IMR-90 (cell line): ENCODE measurements at regions of chr10 and their contacts with region 1.

Region 1: GRCh38 chr10:21399392-21400035 is 126.0 kb downstream of the SKIDA1 start:
- DNase-seq: peak; percentile 98
- ATAC-seq: peak; percentile 95
- H3K4me3 ChIP-seq: no peak overlapping the region
- H3K27ac ChIP-seq: peak overlapping the region; percentile 47; the same call in 1 of the 2 replicates
- H3K4me1 ChIP-seq: peaks cover 19% of the 10 kb centered on the region
- H3K27me3 ChIP-seq: no peaks in the 10 kb centered on the region
- CTCF ChIP-seq: no peak
- POLR2A ChIP-seq: no peak
- RAD21 ChIP-seq: no peak

Region 2: GRCh38 chr10:21292763-21293517 is 106.6 kb before region 1 on chr10:
- CTCF ChIA-PET with region 1: no interaction called
- POLR2A ChIA-PET with region 1: no interaction called
- dilution Hi-C with region 1: no loop called
- in situ Hi-C with region 1: no loop called
- intact Hi-C with region 1: loop called (anchors 2 kb)
- DNase-seq: peak; percentile 98
- ATAC-seq: peak; percentile 94
- H3K4me3 ChIP-seq: peak overlapping the region; percentile 13
- H3K27ac ChIP-seq: peak overlapping the region; percentile 72
- H3K4me1 ChIP-seq: peaks cover 2% of the 10 kb centered on the region; the same call in 1 of the 2 replicates
- H3K27me3 ChIP-seq: no peaks in the 10 kb centered on the region
- CTCF ChIP-seq: no peak
- POLR2A ChIP-seq: no peak
- RAD21 ChIP-seq: peak; percentile 14; the same call in 1 of the 2 replicates

Region 3: DNA sequence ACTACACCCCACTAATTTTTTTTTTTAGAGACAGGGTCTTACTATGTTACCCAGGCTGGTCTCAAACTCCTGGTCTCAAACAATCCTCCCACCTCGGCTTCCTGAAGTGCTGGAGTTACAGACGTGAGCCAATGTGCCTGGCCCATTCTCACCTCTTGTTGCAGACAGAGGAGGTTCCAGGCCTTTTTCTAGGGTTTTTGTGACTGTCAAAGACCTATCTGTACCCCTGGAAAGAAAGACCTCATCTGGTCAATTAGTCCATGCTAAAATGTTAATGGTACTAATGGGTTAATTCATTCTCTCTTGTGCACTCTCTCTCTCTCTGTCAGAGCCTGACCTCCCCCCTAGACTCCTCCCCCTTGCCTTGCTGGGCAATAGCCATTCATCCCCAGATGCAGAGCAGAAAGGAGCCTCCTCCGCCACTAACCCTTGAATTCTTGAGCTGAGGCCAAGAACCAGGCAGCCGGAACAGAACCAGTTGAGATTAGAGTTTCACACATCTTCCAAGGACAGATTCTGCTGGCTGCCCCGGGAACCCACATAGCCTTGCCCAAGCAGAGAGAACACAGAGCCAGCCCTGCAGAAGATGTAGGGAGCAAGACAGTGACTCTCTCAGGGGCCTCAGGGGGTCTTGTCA is 83.8 kb before region 1 on chr10:
- CTCF ChIA-PET with region 1: no interaction called
- POLR2A ChIA-PET with region 1: no interaction called
- dilution Hi-C with region 1: no loop called
- in situ Hi-C with region 1: no loop called
- intact Hi-C with region 1: loop called (anchors 1 kb)
- DNase-seq: peak; percentile 86
- ATAC-seq: peak; percentile 87
- H3K4me3 ChIP-seq: no peak overlapping the region
- H3K27ac ChIP-seq: peak overlapping the region; percentile 78
- H3K4me1 ChIP-seq: peaks cover 27% of the 10 kb centered on the region
- H3K27me3 ChIP-seq: no peaks in the 10 kb centered on the region
- CTCF ChIP-seq: no peak
- POLR2A ChIP-seq: no peak
- RAD21 ChIP-seq: no peak